Activated CD8-positive, alpha-beta T cell treated with anti-CD3 and anti-CD28 coated beads for 36 hours (primary cell): ENCODE measurements at regions of chr4 and their contacts with region 1.

Region 1: GRCh38 chr4:38179690-38180377 is 219.6 kb downstream of the PTTG2 start:
- DNase-seq: peak; percentile 82
- ATAC-seq: peak; percentile 65
- H3K4me3 Mint-ChIP-seq: no peak overlapping the region
- H3K27ac Mint-ChIP-seq: no peak overlapping the region
- H3K4me1 Mint-ChIP-seq: peaks cover 33% of the 10 kb centered on the region
- H3K27me3 Mint-ChIP-seq: no peaks in the 10 kb centered on the region
- CTCF ChIP-seq: peak; percentile 96

Region 2: DNA sequence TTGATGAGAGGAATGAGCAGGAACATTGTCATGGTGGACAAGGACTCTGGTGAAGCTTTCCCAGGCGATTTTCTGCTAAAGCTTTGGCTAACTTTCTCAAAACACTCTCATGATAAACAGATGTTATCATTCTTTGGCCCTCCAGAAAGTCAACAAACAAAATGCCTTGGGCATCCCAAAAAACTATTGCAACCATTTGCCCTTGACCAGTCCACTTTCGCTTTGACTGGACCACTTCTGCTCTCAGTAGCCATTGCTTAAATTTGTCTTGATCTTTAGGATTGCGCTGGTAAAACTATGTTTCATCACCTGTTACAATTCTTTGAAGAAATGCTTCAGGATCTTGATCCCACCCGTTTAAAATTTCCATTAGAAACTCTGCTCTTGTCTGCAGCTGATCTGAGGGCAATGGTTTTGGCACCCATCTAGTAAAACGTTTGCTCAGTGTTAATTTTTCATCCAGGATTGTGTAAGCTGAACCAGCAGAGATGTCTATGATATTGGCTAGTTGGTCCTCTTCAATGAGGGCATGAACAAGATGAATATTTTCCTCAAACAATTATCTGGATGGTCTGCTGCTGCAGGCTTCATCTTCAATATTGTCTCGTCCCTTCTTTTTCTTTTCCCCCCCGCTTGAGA is 274.2 kb before region 1 on chr4:
- CTCF ChIA-PET with region 1: no interaction called
- POLR2A ChIA-PET with region 1: no interaction called
- intact Hi-C with region 1: no loop called
- DNase-seq: no peak
- ATAC-seq: no peak
- H3K4me3 Mint-ChIP-seq: no peak overlapping the region
- H3K27ac Mint-ChIP-seq: no peak overlapping the region
- H3K4me1 Mint-ChIP-seq: peaks cover 39% of the 10 kb centered on the region
- H3K27me3 Mint-ChIP-seq: no peaks in the 10 kb centered on the region
- CTCF ChIP-seq: no peak

Region 3: GRCh38 chr4:38062088-38062893 is 117.5 kb before region 1 on chr4:
- CTCF ChIA-PET with region 1: interaction called, 23 read pairs
- POLR2A ChIA-PET with region 1: no interaction called
- intact Hi-C with region 1: loop called (anchors 5 kb)
- DNase-seq: peak; percentile 78
- ATAC-seq: peak; percentile 62
- H3K4me3 Mint-ChIP-seq: peak overlapping the region; percentile 60
- H3K27ac Mint-ChIP-seq: peak overlapping the region; percentile 73
- H3K4me1 Mint-ChIP-seq: peaks cover 13% of the 10 kb centered on the region
- H3K27me3 Mint-ChIP-seq: no peaks in the 10 kb centered on the region
- CTCF ChIP-seq: peak; percentile 97

Region 4: DNA sequence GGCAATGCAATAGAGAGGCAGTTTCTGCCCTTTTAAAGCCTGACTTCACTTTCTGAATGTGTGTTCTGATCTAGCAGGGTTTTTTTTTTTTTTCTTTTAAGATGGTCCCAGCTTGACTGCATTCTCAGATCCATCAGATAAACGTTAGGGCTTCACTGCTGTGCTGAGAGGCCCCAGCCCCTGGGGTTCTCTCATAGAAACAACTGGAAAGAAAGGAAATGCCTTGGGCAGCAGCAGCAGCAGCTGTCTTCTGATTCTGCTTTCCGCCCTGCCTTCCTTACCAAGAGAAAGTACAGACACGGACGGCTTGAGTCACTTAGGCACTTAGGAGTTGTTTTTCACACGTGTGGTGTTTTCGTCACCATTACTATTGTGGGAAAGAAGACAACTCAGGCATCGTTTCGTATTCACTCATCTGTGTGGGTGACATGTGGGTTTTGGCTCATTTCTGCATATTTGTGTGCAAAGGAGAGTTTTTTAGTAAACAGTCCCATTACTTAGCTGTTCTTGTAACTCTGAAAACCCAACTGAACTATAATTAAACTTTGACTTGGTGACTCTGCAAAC is 47.6 kb before region 1 on chr4:
- CTCF ChIA-PET with region 1: interaction called, 8 read pairs
- POLR2A ChIA-PET with region 1: no interaction called
- intact Hi-C with region 1: loop called (anchors 5 kb)
- DNase-seq: peak; percentile 90
- ATAC-seq: peak; percentile 64
- H3K4me3 Mint-ChIP-seq: peak overlapping the region; percentile 53
- H3K27ac Mint-ChIP-seq: peak overlapping the region; percentile 87
- H3K4me1 Mint-ChIP-seq: peaks cover 62% of the 10 kb centered on the region
- H3K27me3 Mint-ChIP-seq: no peaks in the 10 kb centered on the region
- CTCF ChIP-seq: no peak

Region 5: DNA sequence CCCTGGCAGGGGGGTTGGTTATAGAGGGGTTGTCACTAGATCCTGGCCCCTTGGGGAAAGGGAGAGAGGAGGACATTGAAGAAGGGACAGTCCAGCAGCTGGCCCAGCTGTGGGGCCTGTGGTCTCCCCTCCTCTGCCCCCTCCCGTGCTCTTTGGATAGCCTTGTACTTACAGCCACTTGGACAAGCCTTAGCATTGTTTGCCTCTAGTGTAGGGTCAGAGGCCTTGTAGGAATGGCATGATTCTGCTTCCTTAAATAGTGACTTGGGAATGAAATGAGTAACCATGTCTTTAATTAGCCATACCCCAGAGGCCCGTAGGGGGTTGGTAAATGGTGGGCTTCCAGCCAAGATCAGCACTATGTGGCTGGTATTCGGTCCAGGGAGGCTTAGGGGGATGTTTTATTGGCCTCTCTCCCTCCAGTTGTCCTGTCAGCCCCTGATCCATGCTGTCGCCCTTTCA is 10.9 kb after region 1 on chr4:
- CTCF ChIA-PET with region 1: interaction called, 12 read pairs
- POLR2A ChIA-PET with region 1: interaction called, 4 read pairs
- intact Hi-C with region 1: no loop called
- DNase-seq: no peak
- ATAC-seq: no peak
- H3K4me3 Mint-ChIP-seq: no peak overlapping the region
- H3K27ac Mint-ChIP-seq: no peak overlapping the region
- H3K4me1 Mint-ChIP-seq: no peaks in the 10 kb centered on the region
- H3K27me3 Mint-ChIP-seq: peaks cover 2% of the 10 kb centered on the region
- CTCF ChIP-seq: no peak

Region 6: DNA sequence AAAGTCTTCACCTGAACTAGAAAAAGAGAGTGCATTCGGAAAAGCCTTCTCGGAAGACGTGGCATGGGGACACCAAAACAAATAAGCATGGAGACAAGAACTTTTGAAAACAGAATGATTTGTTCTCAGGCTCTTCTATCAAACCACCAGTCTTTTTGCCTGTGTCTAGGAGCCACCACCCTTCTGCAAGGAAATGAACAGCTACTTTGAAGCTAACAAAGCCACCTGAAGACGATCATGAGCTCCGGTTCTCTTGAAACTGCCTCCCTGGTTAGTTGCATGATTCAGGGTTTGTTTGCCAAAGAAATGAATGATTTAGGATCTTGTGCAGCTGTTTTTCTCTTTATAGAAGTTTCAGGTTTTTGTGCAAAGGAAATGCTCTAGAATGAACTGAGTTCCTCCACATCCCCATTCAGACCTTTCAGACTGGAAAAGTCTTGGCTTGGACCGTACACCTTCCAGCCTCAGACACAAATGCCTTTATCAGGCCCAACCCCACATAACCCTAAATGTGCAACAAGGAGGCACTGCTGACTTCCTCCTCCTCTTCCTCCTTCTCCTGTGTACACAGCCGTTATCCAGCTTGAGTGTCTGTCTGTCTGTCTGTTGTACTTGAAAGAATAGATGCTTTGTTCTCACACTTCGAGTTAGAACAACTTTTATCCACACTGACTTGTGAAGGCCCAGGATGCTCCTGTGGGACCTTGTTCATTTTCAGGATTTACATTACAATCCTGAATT is 149.3 kb after region 1 on chr4:
- CTCF ChIA-PET with region 1: interaction called, 15 read pairs
- POLR2A ChIA-PET with region 1: no interaction called
- intact Hi-C with region 1: no loop called
- DNase-seq: no peak
- ATAC-seq: peak; percentile 51
- H3K4me3 Mint-ChIP-seq: no peak overlapping the region
- H3K27ac Mint-ChIP-seq: no peak overlapping the region
- H3K4me1 Mint-ChIP-seq: peaks cover 63% of the 10 kb centered on the region
- H3K27me3 Mint-ChIP-seq: no peaks in the 10 kb centered on the region
- CTCF ChIP-seq: no peak

Region 7: GRCh38 chr4:38366456-38366855 is 186.6 kb after region 1 on chr4:
- CTCF ChIA-PET with region 1: no interaction called
- POLR2A ChIA-PET with region 1: no interaction called
- intact Hi-C with region 1: no loop called
- DNase-seq: no peak
- ATAC-seq: no peak
- H3K4me3 Mint-ChIP-seq: no peak overlapping the region
- H3K27ac Mint-ChIP-seq: no peak overlapping the region
- H3K4me1 Mint-ChIP-seq: peaks cover 18% of the 10 kb centered on the region
- H3K27me3 Mint-ChIP-seq: no peaks in the 10 kb centered on the region
- CTCF ChIP-seq: no peak

Region 8: GRCh38 chr4:38691251-38692008 is 511.6 kb after region 1 on chr4:
- CTCF ChIA-PET with region 1: interaction called, 20 read pairs
- POLR2A ChIA-PET with region 1: no interaction called
- intact Hi-C with region 1: no loop called
- DNase-seq: no peak
- ATAC-seq: no peak
- H3K4me3 Mint-ChIP-seq: no peak overlapping the region
- H3K27ac Mint-ChIP-seq: no peak overlapping the region
- H3K4me1 Mint-ChIP-seq: peaks cover 31% of the 10 kb centered on the region
- H3K27me3 Mint-ChIP-seq: no peaks in the 10 kb centered on the region
- CTCF ChIP-seq: no peak

Region 9: DNA sequence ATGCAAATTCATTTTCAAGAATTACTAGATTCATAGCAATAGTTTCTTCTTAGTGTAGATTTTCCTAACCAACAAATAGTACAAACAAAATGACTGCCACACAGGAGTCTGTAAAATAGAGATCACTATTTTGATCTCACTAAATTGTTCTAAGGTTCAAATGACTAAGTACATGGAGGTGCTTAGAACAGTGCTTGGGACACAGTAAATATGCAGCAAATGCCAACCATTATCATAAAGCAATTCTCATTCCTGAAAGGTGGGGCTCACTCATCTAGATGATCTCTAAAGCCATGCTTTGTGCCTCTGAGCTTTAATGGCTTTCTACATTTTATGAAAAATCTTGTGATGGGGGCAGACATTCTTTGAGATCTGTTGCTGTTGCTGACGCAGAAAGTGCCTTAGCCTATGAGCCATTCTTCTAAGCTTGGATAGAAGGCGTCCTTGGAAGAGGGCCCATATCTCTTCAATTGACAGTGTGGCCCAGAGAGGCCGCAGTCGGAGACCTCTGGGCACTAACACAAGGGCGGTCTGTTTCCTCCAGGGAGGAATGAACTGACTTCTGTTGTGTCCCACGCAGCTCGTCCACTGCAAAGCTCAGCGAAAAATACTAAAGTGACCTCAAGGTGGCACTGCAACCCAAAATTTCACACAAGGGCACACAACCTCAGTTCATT is 579.4 kb after region 1 on chr4:
- CTCF ChIA-PET with region 1: interaction called, 14 read pairs
- POLR2A ChIA-PET with region 1: interaction called, 3 read pairs
- intact Hi-C with region 1: no loop called
- DNase-seq: peak; percentile 76
- ATAC-seq: peak; percentile 80
- H3K4me3 Mint-ChIP-seq: no peak overlapping the region
- H3K27ac Mint-ChIP-seq: no peak overlapping the region
- H3K4me1 Mint-ChIP-seq: peaks cover 16% of the 10 kb centered on the region
- H3K27me3 Mint-ChIP-seq: no peaks in the 10 kb centered on the region
- CTCF ChIP-seq: peak; percentile 84